Lower leg skin (tissue), 4 donors: ENCODE measurements at regions of chr18 and their contacts with region 1.

Region 1: GRCh38 chr18:10858477-10858876 is 290.9 kb downstream of the PIEZO2 start:
- DNase-seq: no peak
- H3K4me3 ChIP-seq: no peak overlapping the region
- CTCF ChIP-seq: no peak
- POLR2A ChIP-seq: no peak

Region 2: GRCh38 chr18:9575558-9575957 is 1282.9 kb before region 1 on chr18:
- intact Hi-C with region 1: no loop called
- DNase-seq: peak in 1 of 2 donors; percentile 72
- H3K4me3 ChIP-seq: no peak overlapping the region
- CTCF ChIP-seq: no peak
- POLR2A ChIP-seq: no peak

Region 3: DNA sequence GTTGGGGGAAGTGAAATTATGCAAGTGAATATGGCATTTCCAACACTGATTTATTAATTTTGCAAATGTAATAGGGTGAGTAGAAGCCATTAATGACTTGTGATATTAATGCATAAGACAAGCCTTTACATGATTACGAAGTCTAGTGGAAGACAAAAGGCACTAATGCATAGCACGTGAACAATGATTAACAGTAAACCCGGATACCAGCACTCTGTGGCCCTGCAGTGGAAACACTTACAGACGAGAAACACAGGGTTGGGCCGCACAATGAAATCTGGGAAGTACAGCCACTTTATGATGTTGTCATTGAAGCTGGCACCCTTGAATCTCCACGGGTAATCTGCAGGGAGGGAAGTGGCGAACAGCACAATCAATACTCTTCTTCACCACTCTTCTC is 99.2 kb before region 1 on chr18:
- intact Hi-C with region 1: loop called (anchors 2 kb)
- DNase-seq: no peak
- H3K4me3 ChIP-seq: no peak overlapping the region
- CTCF ChIP-seq: no peak
- POLR2A ChIP-seq: no peak

Region 4: GRCh38 chr18:10798727-10799308 is 59.7 kb before region 1 on chr18:
- intact Hi-C with region 1: no loop called
- DNase-seq: no peak
- H3K4me3 ChIP-seq: no peak overlapping the region
- CTCF ChIP-seq: no peak
- POLR2A ChIP-seq: no peak